Naive thymus-derived CD8-positive, alpha-beta T cell (primary cell): ENCODE measurements at regions of chr2 and their contacts with region 1.

Region 1: DNA sequence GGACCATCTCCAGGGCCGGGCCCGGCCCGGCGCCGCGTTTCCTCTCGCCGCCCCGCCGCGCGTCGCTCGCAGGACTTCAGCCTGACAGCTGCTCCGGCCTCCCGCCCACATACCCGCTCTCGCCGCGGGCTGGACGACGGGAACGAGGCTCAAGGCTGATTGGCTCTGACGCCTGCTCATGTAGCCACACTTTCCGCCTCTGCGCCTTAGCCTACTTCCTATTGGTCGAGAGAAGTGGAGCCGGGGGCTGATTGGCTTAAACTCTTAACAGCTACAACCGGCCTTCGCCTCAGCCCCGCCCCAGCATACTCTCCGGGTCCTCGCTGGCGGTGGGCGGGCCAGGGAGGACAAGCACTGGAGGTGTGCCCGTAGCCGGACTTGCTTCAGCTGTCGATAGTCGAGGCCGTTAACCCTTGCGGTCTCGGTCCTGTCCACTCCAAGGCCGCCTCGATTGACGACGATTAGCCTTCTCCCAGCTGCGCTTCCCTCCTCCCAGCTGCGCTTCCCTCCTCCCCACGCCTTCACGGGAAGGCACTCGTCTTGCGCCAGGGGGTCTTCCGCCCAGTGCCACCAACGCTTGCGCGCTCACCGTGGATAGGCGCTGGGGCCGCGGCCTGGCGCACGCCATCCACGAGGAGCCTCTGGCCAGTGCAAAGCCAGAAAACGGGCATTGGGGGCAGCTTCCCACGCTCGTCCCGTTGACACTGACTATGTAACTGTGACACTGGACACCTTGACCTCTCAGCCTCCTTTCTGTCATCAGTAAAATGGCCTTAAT is at the start of gene PRADC1:
- DNase-seq: peak; percentile 78 to 98 (median 93)
- ATAC-seq: peak; percentile 80 to 85
- H3K4me3 Mint-ChIP-seq: peak within 1 kb of the TSS; percentile 90 to 99 (median 97)
- H3K27ac Mint-ChIP-seq: peak within 1 kb of the TSS; percentile 91 to 98 (median 97)
- H3K4me1 Mint-ChIP-seq: peaks cover 25 to 51% (median 39%) of the 10 kb centered on the region in 4 donors
- H3K27me3 Mint-ChIP-seq: no peaks in the 10 kb centered on the region
- polyA plus RNA-seq, gene PRADC1: 26.1 to 38.8 (median 27.6) TPM

Region 2: GRCh38 chr2:72973566-72974435 is 259.5 kb before region 1 on chr2:
- POLR2A ChIA-PET with region 1: no interaction called
- DNase-seq: peak in 3 of 10 donors; percentile 18 to 28 (median 27)
- ATAC-seq: peak; percentile 36 to 72
- H3K4me3 Mint-ChIP-seq: no peak overlapping the region
- H3K27ac Mint-ChIP-seq: no peak overlapping the region
- H3K4me1 Mint-ChIP-seq: peaks cover 0 to 2% (median 0%) of the 10 kb centered on the region in 4 donors
- H3K27me3 Mint-ChIP-seq: no peaks in the 10 kb centered on the region

Region 3: DNA sequence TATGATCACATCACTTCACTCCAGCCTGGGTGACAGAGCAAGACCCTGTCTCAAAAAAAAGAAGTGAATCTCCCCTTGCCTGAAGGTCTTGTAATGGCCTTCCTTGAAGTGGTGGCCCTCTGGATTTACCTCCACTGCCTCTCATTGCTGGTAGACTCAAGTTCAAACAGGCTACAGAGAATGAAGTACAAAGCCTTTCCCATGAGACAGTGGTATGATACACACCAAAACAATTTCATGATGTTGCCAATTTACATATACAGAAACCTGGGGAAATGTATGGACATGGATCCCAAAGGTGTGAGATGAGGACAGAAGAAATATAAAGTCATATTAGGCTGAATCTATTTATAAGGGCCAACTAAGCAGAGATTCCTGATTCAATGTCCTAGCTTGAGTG is 35.8 kb before region 1 on chr2:
- POLR2A ChIA-PET with region 1: no interaction called
- DNase-seq: no peak
- ATAC-seq: no peak
- H3K4me3 Mint-ChIP-seq: no peak overlapping the region
- H3K27ac Mint-ChIP-seq: no peak overlapping the region
- H3K4me1 Mint-ChIP-seq: peaks cover 0 to 9% (median 3%) of the 10 kb centered on the region in 4 donors
- H3K27me3 Mint-ChIP-seq: peaks cover 16 to 44% (median 33%) of the 10 kb centered on the region in 5 donors

Region 4: GRCh38 chr2:73212448-73213176 is 20.7 kb before region 1 on chr2:
- POLR2A ChIA-PET with region 1: interaction called, 29 read pairs
- DNase-seq: peak; percentile 52 to 79 (median 68)
- ATAC-seq: peak; percentile 66 to 71
- H3K4me3 Mint-ChIP-seq: peak overlapping the region in 9 of 10 donors; percentile 44 to 88 (median 58)
- H3K27ac Mint-ChIP-seq: peak overlapping the region in 9 of 10 donors; percentile 13 to 98 (median 68)
- H3K4me1 Mint-ChIP-seq: peaks cover 14 to 39% (median 32%) of the 10 kb centered on the region in 4 donors
- H3K27me3 Mint-ChIP-seq: peaks cover 5 to 12% (median 7%) of the 10 kb centered on the region in 5 donors

Region 5: GRCh38 chr2:73268830-73269685 is 35.7 kb after region 1 on chr2:
- POLR2A ChIA-PET with region 1: interaction called, 16 read pairs
- DNase-seq: peak; percentile 40 to 91 (median 70)
- ATAC-seq: peak; percentile 95 to 96
- H3K4me3 Mint-ChIP-seq: peak overlapping the region in 9 of 10 donors; percentile 15 to 76 (median 58)
- H3K27ac Mint-ChIP-seq: peak overlapping the region in 1 of 10 donors; percentile 77
- H3K4me1 Mint-ChIP-seq: peaks cover 22 to 34% (median 30%) of the 10 kb centered on the region in 4 donors
- H3K27me3 Mint-ChIP-seq: peaks cover 0 to 1% (median 0%) of the 10 kb centered on the region in 5 donors

Region 6: GRCh38 chr2:73293534-73294171 is 60.3 kb after region 1 on chr2 and contains the start of gene EGR4:
- POLR2A ChIA-PET with region 1: interaction called, 27 read pairs
- DNase-seq: peak; percentile 73 to 95 (median 89)
- ATAC-seq: peak; percentile 90 to 94
- H3K4me3 Mint-ChIP-seq: peak within 1 kb of the TSS; percentile 60 to 84 (median 76)
- H3K27ac Mint-ChIP-seq: peak within 1 kb of the TSS in 2 of 10 donors; percentile 61 to 65
- H3K4me1 Mint-ChIP-seq: peaks cover 3 to 20% (median 14%) of the 10 kb centered on the region in 4 donors
- H3K27me3 Mint-ChIP-seq: peaks cover 37 to 70% (median 63%) of the 10 kb centered on the region in 5 donors
- polyA plus RNA-seq, gene EGR4: not detected

Region 7: DNA sequence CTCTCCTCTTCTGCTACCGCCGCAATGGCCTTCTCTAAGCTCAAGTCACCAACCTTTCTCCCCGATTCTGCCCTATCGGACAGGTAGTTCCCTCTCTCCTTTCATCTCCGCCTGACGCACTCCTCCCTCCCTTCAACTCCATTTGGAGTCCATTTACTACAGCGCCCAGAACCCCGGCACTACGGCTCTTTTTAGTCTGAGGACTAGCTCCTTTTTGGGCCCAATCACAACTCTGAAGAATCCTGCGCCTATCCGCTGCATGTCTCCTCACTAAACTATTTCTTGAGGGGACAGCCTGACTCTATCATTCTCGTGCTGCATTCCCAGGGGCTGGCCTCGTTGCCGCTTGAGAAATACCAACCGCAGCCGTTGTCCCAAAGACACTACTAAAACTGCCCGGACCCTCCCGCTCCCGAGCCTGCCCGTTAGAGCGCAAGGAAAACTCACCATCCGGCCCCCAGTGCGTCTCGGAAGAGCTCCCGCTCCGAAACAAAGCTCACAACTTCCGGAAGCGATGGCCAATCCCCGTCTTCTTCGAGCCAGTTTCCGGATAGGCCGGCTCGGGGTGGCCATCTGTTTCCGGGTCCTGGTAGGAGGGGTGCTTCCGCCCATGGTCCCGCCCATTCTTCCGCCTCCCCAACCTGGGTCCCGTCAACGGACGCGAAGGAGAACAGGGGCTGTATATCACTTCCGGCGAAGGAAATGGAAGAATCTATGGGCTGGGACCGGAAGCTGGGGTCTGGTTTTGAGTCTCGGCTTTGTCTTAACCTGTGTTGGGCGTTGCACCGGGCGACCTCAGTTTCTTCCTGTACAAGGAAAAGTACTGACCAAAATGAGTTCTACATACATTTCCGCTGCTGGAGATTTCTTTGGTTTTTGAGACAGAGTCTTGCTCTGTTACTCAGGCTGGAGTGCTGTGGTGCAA is 503.8 kb after region 1 on chr2 and contains the start of gene TPRKB:
- POLR2A ChIA-PET with region 1: interaction called, 16 read pairs
- DNase-seq: peak; percentile 83 to 98 (median 94)
- ATAC-seq: peak; percentile 95 to 97
- H3K4me3 Mint-ChIP-seq: peak within 1 kb of the TSS; percentile 88 to 98 (median 95)
- H3K27ac Mint-ChIP-seq: peak within 1 kb of the TSS; percentile 88 to 96 (median 94)
- H3K4me1 Mint-ChIP-seq: peaks cover 17 to 28% (median 21%) of the 10 kb centered on the region in 4 donors
- H3K27me3 Mint-ChIP-seq: no peaks in the 10 kb centered on the region
- polyA plus RNA-seq, gene TPRKB: 71.4 to 74.7 (median 72.6) TPM

Region 8: GRCh38 chr2:74464406-74464928 is 1231.1 kb after region 1 on chr2:
- POLR2A ChIA-PET with region 1: no interaction called
- DNase-seq: no peak
- ATAC-seq: no peak
- H3K4me3 Mint-ChIP-seq: peak overlapping the region; percentile 76 to 98 (median 84)
- H3K27ac Mint-ChIP-seq: peak overlapping the region in 9 of 10 donors; percentile 19 to 99 (median 74)
- H3K4me1 Mint-ChIP-seq: peaks cover 12 to 36% (median 32%) of the 10 kb centered on the region in 4 donors
- H3K27me3 Mint-ChIP-seq: no peaks in the 10 kb centered on the region